ENCODE measurements at regions of chr12 and their contacts with region 1.

Region 1: DNA sequence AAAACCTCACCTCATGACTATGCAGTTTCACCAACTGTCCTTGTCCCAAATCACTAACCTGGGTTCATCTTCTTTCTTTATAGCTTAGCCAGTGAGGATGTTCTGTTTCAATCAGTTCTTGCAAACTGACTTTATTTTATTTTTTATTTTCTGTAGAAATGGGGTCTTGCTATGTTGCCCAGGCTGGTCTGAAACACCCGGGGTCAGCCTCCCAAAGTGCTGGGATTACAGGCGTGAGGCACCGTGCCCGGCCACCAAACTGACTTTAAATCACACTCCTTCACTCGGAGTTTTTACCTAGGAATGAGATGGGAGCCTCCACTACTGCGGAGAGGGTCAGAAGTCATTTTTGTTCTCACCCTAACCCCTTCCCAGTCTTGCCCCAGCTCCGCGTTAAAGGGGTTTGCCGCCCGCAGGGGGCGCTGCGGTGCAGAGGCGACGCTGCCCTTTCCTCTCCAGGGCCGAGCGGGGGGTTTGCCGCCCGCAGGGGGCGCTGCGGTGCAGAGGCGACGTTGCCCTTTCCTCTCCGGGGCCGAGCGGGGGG is 7.0 kb upstream of the B4GALNT3 start:
- DNase-seq: peak; percentile 71
- CTCF ChIP-seq: peak; percentile 46

Region 2: DNA sequence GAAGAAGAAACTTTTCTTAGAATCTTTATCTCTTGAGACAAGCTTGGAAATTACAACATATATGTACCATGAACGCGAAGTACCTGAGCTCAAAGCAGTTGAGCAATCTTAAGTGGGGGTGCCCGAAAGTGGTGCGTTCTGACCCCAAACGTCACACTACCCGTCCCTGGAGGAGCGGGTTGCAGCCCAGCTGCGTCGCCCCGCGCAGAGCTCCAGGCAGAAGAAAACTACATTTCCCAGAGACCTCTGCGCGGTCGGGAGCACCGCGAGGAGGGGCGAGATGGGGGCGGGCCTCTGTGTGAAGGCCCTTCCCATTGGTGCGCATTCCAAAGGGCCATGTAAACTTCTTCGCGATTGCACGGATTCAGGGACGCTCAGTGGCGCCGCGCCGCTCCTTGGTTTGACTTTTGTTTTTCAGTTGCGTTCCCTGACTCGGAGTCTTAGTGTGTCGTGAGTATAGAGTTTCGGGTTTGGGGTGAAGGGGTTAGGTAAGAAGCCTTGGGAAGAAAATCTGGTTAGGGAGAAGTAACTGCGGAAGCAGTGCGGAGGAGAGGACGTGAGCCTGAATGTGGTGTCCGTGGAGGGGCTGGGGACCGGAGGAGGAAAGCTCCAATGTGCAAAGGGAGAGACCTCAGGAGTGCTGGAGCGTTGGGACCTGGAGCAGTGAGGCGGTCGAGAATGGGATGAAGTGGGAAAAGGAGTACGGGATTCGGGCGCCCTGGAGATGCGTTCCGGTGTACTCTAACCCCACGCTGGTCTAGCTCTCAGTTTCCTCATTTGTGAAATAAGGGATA is 51.3 kb before region 1 on chr12 and contains the start of gene CCDC77:
- CTCF ChIA-PET with region 1: interaction called, 13 read pairs
- POLR2A ChIA-PET with region 1: no interaction called
- DNase-seq: peak; percentile 96
- CTCF ChIP-seq: no peak

Region 3: GRCh38 chr12:442235-442884 is 10.4 kb before region 1 on chr12:
- CTCF ChIA-PET with region 1: interaction called, 95 read pairs
- POLR2A ChIA-PET with region 1: no interaction called
- DNase-seq: peak; percentile 34
- CTCF ChIP-seq: peak; percentile 61

Region 4: GRCh38 chr12:484117-484516 is 31.4 kb after region 1 on chr12:
- CTCF ChIA-PET with region 1: interaction called, 14 read pairs
- POLR2A ChIA-PET with region 1: no interaction called
- DNase-seq: no peak
- CTCF ChIP-seq: no peak

Region 5: GRCh38 chr12:530308-530707 is 77.6 kb after region 1 on chr12:
- CTCF ChIA-PET with region 1: interaction called, 132 read pairs
- POLR2A ChIA-PET with region 1: no interaction called
- DNase-seq: no peak
- CTCF ChIP-seq: no peak

Region 6: DNA sequence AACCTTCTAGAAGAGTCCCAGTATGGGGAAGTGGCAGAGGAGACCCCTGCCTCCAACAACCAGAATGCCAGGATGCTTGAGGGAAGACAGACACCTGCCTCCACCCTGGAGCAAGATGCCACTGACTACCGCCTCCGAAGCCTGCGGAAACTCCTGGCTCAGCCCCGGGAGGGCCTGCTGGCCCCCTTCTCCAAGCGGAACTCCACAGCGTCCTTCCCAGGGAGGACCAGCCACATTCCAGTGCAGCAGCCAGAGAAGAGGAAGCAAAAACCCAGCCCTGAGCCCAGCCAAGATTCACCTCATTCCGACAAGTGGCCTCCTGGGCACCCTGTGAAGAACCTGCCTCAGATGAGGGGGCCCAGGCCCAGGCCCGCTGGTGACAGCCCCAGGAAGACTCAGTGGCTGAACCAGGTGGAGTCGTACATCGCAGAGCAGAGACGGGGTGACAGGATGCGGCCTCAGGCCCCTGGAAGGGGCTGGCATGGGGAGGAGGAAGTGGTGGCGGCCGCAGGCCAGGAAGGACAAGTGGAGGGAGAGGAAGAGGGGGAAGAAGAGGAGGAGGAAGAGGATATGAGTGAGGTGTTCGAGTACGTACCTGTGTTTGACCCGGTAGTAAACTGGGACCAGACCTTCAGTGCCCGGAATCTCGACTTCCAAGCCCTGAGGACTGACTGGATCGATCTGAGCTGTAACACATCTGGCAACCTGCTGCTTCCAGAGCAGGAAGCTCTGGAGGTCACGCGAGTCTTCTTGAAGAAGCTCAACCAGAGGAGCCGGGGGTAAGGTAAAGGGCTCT is 100.7 kb after region 1 on chr12:
- CTCF ChIA-PET with region 1: interaction called, 144 read pairs
- POLR2A ChIA-PET with region 1: no interaction called
- DNase-seq: no peak
- CTCF ChIP-seq: no peak

Region 7: GRCh38 chr12:575948-576612 is 123.3 kb after region 1 on chr12:
- CTCF ChIA-PET with region 1: interaction called, 12 read pairs
- POLR2A ChIA-PET with region 1: no interaction called
- DNase-seq: peak; percentile 93
- CTCF ChIP-seq: peak; percentile 96